Left lung (tissue), 14 donors: ENCODE measurements at regions of chr12 and their contacts with region 1.

Region 1: GRCh38 chr12:20798561-20798960 is 11.9 kb upstream of the SLCO1B3 start:
- DNase-seq: peak in 2 of 4 donors; percentile 2 to 18
- ATAC-seq: peak; percentile 76
- H3K4me3 ChIP-seq: no peak overlapping the region
- H3K27ac ChIP-seq: no peak overlapping the region
- H3K4me1 ChIP-seq: no peaks in the 10 kb centered on the region
- H3K27me3 ChIP-seq: no peaks in the 10 kb centered on the region
- CTCF ChIP-seq: peak in 1 of 2 donors; percentile 10

Region 2: DNA sequence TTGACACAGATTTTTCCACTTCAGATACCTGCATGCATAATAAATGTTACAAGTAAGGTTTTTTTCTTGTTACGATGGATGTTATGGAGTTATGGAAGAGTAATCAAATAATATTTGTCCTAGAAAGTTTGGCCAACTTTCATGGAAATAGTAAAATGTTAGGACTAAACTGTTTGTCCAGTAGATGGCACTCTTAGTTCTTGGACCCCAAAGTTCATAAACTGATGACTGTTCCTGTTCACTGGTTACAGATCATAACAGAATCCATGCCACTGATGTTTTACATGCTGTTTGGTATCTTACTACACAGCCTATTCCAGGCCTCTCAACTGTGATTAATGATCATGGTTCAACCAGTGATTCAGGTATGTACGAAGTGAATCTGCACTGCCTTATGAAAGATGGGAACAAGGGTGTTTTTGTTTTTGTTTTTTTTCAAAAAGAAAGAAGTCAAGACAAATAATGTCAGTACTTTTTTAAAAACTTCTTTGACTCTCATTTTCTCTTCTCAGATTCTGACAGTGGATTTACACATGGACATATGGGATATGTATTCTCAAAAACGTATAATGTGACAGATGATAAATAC is 152.2 kb before region 1 on chr12:
- intact Hi-C with region 1: loop called in 1 of 2 experiments (anchors 10 kb)
- DNase-seq: peak in 1 of 4 donors; percentile 37
- ATAC-seq: peak; percentile 70
- H3K4me3 ChIP-seq: no peak overlapping the region
- H3K27ac ChIP-seq: no peak overlapping the region
- H3K4me1 ChIP-seq: no peaks in the 10 kb centered on the region
- H3K27me3 ChIP-seq: no peaks in the 10 kb centered on the region
- CTCF ChIP-seq: peak in 1 of 2 donors; percentile 27